ENCODE measurements at regions of chr14 and their contacts with region 1.

Region 1: GRCh38 chr14:64503478-64504309 is at the start of gene ZBTB25:
- DNase-seq: peak; percentile 83 to 93
- ATAC-seq: peak; percentile 39 to 47
- H3K4me3 ChIP-seq: peak within 1 kb of the TSS; percentile 75 to 94 (median 86)
- H3K27ac ChIP-seq: peak within 1 kb of the TSS; percentile 97 to 99 (median 98)
- H3K4me1 ChIP-seq: peaks cover 56 to 59% of the 10 kb centered on the region in 2 donors
- H3K27me3 ChIP-seq: no peaks in the 10 kb centered on the region
- CTCF ChIP-seq: peak in 1 of 5 experiments; percentile 10
- POLR2A ChIP-seq: peak; percentile 93 to 94
- total RNA-seq, gene ZBTB25: 6.9 to 13.7 (median 10.4) TPM

Region 2: GRCh38 chr14:63641473-63642228 is 862.0 kb before region 1 on chr14 and contains the start of gene WDR89:
- in situ Hi-C with region 1: no loop called
- intact Hi-C with region 1: loop called (anchors 5 kb)
- DNase-seq: peak; percentile 98 to 99
- ATAC-seq: peak; percentile 91 to 93
- H3K4me3 ChIP-seq: peak within 1 kb of the TSS; percentile 68 to 88 (median 78)
- H3K27ac ChIP-seq: peak within 1 kb of the TSS; percentile 90 to 97 (median 92)
- H3K4me1 ChIP-seq: peaks cover 5 to 12% of the 10 kb centered on the region in 2 donors
- H3K27me3 ChIP-seq: no peaks in the 10 kb centered on the region
- CTCF ChIP-seq: peak; percentile 90 to 92 (median 91)
- POLR2A ChIP-seq: peak; percentile 41 to 62
- total RNA-seq, gene WDR89: 3.5 to 6.2 (median 5.1) TPM

Region 3: GRCh38 chr14:64218344-64219240 is 285.1 kb before region 1 on chr14:
- in situ Hi-C with region 1: no loop called
- intact Hi-C with region 1: loop called (anchors 5 kb)
- DNase-seq: peak; percentile 65 to 67
- ATAC-seq: no peak
- H3K4me3 ChIP-seq: peak overlapping the region in 2 of 4 donors; percentile 3 to 28
- H3K27ac ChIP-seq: peak overlapping the region; percentile 89 to 99 (median 96)
- H3K4me1 ChIP-seq: peaks cover 75 to 85% of the 10 kb centered on the region in 2 donors
- H3K27me3 ChIP-seq: no peaks in the 10 kb centered on the region
- CTCF ChIP-seq: no peak
- POLR2A ChIP-seq: peak in 1 of 2 donors; percentile 27

Region 4: DNA sequence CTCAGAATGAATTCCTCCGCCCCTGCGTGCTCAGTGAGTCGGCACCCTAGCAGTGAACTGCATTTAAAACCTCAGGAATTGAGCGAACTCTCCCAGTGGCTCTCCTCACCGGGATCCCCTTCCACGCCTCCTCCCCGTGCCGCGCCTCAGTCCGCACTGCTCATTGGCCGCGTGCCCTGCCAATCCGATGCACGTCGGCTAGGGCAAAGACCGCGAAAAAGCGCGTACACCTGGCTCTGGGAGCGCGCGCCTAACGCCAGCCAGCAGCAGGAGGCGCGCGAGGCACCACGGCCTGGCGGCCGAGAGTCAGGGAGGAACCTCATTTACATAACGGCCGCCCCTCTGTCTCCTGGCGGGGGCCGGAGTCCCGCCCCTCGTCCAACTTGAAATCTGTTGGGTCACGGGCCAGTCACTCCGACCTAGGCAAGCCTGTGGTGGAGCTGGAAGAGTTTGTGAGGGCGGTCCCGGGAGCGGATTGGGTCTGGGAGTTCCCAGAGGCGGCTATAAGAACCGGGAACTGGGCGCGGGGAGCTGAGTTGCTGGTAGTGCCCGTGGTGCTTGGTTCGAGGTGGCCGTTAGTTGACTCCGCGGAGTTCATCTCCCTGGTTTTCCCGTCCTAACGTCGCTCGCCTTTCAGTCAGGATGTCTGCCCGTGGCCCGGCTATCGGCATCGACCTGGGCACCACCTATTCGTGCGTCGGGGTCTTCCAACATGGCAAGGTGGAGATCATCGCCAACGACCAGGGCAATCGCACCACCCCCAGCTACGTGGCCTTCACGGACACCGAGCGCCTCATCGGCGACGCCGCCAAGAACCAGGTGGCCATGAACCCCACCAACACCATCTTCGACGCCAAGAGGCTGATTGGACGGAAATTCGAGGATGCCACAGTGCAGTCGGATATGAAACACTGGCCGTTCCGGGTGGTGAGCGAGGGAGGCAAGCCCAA is 36.8 kb after region 1 on chr14 and contains the start of gene HSPA2:
- in situ Hi-C with region 1: no loop called
- intact Hi-C with region 1: loop called (anchors 1 kb)
- DNase-seq: peak; percentile 100
- ATAC-seq: peak; percentile 90 to 94
- H3K4me3 ChIP-seq: peak within 1 kb of the TSS; percentile 61 to 81 (median 74)
- H3K27ac ChIP-seq: peak within 1 kb of the TSS; percentile 87 to 93 (median 88)
- H3K4me1 ChIP-seq: peaks cover 23 to 39% of the 10 kb centered on the region in 2 donors
- H3K27me3 ChIP-seq: no peaks in the 10 kb centered on the region
- CTCF ChIP-seq: peak; percentile 79 to 87 (median 84)
- POLR2A ChIP-seq: peak; percentile 96 to 100
- total RNA-seq, gene HSPA2: 69.6 to 113 (median 96.4) TPM

Region 5: GRCh38 chr14:64914237-64914971 is 410.7 kb after region 1 on chr14 and contains the start of gene CHURC1:
- in situ Hi-C with region 1: no loop called
- intact Hi-C with region 1: loop called (anchors 10 kb)
- DNase-seq: peak; percentile 97 to 99
- ATAC-seq: peak; percentile 99
- H3K4me3 ChIP-seq: peak within 1 kb of the TSS; percentile 86 to 100 (median 90)
- H3K27ac ChIP-seq: peak within 1 kb of the TSS; percentile 95 to 98 (median 97)
- H3K4me1 ChIP-seq: peaks cover 34 to 39% of the 10 kb centered on the region in 2 donors
- H3K27me3 ChIP-seq: no peaks in the 10 kb centered on the region
- CTCF ChIP-seq: no peak
- POLR2A ChIP-seq: peak; percentile 79 to 91
- total RNA-seq, gene CHURC1: 47.9 to 108 (median 79.6) TPM